ENCODE measurements at regions of chr16 and their contacts with region 1.

Region 1: DNA sequence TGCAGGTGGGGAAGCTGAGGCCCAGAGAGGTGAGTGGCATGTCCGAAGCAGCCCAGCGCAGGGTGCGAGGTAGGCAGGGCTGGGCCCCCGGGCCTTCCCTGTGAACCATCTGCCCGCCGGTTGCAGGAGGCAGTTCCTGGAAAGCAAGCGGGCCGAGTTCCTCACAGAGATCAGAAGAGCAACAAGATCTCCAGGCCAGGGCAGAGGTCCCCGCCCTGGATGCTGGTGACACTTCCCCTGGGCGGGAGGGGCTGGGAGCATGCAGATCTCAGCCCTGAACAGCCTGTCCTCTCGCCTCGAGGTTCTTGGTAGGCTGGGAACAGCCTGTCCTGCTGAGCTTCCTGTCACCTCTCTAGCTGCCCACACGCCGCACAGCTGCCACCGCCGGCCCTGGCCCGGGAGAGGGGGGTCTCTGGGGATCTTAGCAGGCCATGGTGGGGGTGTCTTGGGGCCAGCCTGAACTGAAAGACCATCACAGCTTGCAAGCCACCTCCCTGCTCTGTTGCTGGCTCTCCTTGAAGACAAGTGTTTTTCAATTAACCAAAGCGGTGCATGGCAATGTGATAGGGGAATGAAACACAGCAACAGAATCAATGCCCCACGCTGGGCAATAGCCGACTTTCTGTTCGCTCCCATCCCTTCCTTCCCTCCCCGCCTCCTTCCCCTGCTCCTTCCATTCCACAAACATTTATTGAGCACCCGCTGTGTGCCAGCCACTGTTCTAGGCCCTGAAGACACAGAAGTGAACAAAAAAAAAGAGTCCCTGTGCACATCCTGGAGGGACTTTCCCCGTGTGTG is 31.7 kb downstream of the SOCS1 start:
- DNase-seq: peak; percentile 88
- ATAC-seq: peak; percentile 55
- H3K4me3 Mint-ChIP-seq: peak overlapping the region; percentile 54
- H3K27ac Mint-ChIP-seq: peak overlapping the region; percentile 98
- H3K4me1 Mint-ChIP-seq: peaks cover 61% of the 10 kb centered on the region
- H3K27me3 Mint-ChIP-seq: no peaks in the 10 kb centered on the region

Region 2: GRCh38 chr16:10743610-10744393 is 480.5 kb before region 1 on chr16 and contains the start of gene NUBP1:
- CTCF ChIA-PET with region 1: no interaction called
- POLR2A ChIA-PET with region 1: no interaction called
- intact Hi-C with region 1: loop called in 1 of 2 experiments (anchors 5 kb)
- DNase-seq: peak; percentile 100
- ATAC-seq: peak; percentile 95
- H3K4me3 Mint-ChIP-seq: peak within 1 kb of the TSS; percentile 75
- H3K27ac Mint-ChIP-seq: peak within 1 kb of the TSS; percentile 98
- H3K4me1 Mint-ChIP-seq: peaks cover 30% of the 10 kb centered on the region
- H3K27me3 Mint-ChIP-seq: no peaks in the 10 kb centered on the region
- total RNA-seq, gene NUBP1: 25.9 to 33.1 TPM

Region 3: DNA sequence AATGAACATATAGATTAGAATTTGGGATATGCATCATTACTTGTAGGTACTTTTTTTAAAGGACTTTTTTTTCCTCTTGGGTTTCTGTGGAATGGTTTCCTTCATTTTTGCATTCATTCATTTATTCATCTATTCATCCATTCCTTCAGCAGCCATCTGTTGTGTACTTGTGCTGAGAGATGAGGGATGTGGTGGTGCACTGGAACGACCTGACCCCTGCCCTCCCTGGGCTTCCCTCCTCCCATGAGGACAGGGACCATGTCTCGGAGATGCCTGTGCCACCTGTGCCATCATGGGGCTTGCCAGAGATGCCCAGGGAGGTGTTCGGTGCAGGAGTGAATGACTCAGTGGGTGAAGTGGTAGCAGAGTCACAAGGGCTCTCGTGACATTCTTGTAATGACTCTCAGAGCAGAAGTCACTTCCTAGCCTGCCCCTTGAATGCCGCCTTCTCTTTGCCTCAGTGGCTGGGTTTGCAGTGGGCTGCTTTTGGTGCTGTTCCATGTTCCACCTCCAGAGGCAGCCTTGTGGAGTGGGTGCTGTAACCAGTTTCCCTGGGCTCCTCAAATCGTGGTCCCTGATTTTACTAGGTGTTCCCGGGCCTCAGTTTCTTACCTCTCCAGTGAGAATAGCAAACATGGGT is 236.0 kb before region 1 on chr16:
- CTCF ChIA-PET with region 1: interaction called, 3 read pairs
- POLR2A ChIA-PET with region 1: no interaction called
- intact Hi-C with region 1: loop called (anchors 1 kb)
- DNase-seq: peak; percentile 91
- ATAC-seq: peak; percentile 88
- H3K4me3 Mint-ChIP-seq: peak overlapping the region; percentile 46
- H3K27ac Mint-ChIP-seq: peak overlapping the region; percentile 92
- H3K4me1 Mint-ChIP-seq: peaks cover 89% of the 10 kb centered on the region
- H3K27me3 Mint-ChIP-seq: no peaks in the 10 kb centered on the region

Region 4: DNA sequence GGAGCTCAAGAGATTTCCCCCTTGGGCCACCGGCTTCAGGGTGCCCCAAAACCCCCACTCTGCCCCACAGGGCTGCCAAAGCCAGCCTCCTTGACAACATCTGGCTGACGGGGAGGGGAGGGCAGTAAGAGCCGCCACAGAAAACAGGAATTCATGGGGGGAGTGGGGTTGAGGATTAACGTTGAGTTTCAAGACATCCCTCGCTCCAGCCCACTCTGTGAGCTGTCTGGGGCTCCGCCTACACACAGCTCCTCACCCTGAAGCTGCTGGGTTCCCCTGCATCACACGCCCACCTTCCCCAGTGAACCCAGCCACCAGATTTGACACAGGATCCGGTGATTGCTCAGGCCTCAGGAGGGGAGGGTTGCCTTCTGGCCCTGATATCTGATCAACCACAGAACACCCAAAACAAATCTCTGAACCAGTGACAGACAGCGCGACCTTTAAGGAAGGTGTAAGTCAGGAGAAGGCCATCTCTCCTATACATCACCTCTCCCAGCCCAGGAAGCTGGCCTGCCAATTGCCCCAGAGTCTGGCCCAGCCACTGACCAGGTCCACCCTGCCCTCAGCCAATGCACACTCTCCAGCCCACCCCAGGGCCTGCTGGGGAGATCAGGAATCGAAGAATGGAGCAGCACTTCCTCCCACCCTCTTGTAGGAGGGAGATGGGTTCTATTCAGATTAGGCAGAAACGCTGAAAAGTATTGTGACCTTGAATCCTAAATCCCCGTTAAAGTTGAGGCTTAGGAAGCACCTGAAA is 147.9 kb before region 1 on chr16:
- CTCF ChIA-PET with region 1: no interaction called
- POLR2A ChIA-PET with region 1: interaction called, 3 read pairs
- intact Hi-C with region 1: loop called in 1 of 2 experiments (anchors 1 kb)
- DNase-seq: peak; percentile 87
- ATAC-seq: peak; percentile 69
- H3K4me3 Mint-ChIP-seq: peak overlapping the region; percentile 15
- H3K27ac Mint-ChIP-seq: peak overlapping the region; percentile 89
- H3K4me1 Mint-ChIP-seq: peaks cover 96% of the 10 kb centered on the region
- H3K27me3 Mint-ChIP-seq: no peaks in the 10 kb centered on the region

Region 5: GRCh38 chr16:11175787-11176341 is 48.4 kb before region 1 on chr16:
- CTCF ChIA-PET with region 1: no interaction called
- POLR2A ChIA-PET with region 1: no interaction called
- intact Hi-C with region 1: loop called in 1 of 2 experiments (anchors 5 kb)
- DNase-seq: peak; percentile 68
- ATAC-seq: peak; percentile 86
- H3K4me3 Mint-ChIP-seq: no peak overlapping the region
- H3K27ac Mint-ChIP-seq: peak overlapping the region; percentile 90
- H3K4me1 Mint-ChIP-seq: peaks cover 41% of the 10 kb centered on the region
- H3K27me3 Mint-ChIP-seq: no peaks in the 10 kb centered on the region

Region 6: DNA sequence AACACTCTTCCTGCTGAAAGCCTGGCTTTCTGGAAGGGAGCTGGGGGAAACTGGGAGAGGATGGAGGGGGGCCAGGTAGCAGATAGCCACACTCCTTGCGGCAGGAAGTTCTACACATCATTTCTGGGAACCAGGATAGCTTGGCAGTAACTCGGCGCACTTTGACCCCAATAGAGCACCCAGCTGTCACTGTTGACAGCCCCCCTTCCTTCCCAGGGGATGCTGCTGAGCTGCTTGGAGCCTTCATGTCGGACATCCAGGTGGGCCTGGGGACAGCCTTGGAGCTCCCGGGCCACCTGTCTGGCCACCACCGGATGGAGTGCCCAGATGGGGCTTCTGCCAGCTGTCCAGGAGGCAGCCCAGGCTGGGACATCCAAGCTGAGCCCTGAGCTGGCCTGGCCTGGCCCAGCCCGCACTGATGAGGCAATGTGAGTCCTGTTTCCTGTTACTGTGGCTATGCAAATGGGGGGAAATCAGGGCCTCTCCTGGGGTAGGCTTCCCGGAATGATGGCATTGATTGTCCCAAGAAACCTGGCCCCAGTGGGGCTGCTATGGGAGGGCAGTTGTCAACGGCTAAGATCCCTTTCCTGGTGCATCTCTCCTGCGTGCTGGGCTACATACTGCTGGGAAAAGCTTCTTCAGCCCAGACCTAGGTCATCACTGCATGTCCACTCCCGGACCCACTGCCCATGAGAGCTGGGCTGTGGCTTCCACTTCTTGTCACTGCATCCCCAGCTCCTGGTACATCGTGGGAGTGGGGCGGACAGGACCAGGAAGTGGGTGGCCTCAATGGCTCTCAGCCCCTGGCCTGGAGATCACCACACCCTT is 18.3 kb before region 1 on chr16:
- CTCF ChIA-PET with region 1: no interaction called
- POLR2A ChIA-PET with region 1: interaction called, 7 read pairs
- intact Hi-C with region 1: loop called (anchors 2 kb)
- DNase-seq: peak; percentile 43
- ATAC-seq: peak; percentile 45
- H3K4me3 Mint-ChIP-seq: no peak overlapping the region
- H3K27ac Mint-ChIP-seq: peak overlapping the region; percentile 96
- H3K4me1 Mint-ChIP-seq: peaks cover 26% of the 10 kb centered on the region
- H3K27me3 Mint-ChIP-seq: no peaks in the 10 kb centered on the region

Region 7: DNA sequence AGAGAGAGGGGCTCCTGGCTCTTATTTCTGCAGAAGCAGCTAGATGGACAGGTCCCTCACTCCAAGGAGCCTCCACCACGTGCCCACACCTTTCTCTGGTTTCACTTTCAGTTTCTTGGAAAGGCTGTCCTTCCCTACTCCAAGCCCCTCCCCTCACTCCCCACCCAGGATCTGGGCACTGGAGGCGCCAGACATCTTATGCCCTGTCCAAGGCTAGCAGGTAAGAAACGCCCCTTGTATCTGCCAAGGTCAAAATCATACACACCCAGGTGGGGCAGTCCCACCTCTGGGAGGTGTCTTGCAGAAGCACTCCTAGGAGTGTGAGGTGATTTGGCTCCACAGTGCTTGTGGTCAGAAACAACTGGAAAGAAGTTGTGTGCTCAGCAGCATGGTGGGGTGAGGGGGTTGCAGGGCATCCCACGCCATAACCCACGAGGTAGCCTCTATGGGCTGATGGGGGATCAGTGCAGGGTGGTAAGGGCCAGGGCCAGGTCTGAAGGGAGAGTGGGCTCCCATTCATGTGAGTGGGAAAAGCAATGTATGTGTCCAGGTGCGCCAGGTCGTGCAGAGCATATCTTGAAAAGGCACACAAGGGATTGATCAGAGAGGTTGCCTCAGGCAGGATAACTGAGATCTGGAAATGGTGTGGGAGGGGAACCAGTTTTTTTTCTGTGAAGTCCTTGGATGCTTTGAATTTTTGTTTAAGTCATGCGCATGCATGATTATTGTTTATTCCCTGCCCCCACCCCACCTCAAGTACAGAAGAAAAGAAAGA is 88.6 kb after region 1 on chr16:
- CTCF ChIA-PET with region 1: no interaction called
- POLR2A ChIA-PET with region 1: no interaction called
- intact Hi-C with region 1: no loop called
- DNase-seq: peak; percentile 47
- ATAC-seq: peak; percentile 24
- H3K4me3 Mint-ChIP-seq: no peak overlapping the region
- H3K27ac Mint-ChIP-seq: peak overlapping the region; percentile 43
- H3K4me1 Mint-ChIP-seq: peaks cover 38% of the 10 kb centered on the region
- H3K27me3 Mint-ChIP-seq: no peaks in the 10 kb centered on the region

Region 8: GRCh38 chr16:11345040-11345862 is 121.0 kb after region 1 on chr16 and contains the start of gene RMI2:
- CTCF ChIA-PET with region 1: no interaction called
- POLR2A ChIA-PET with region 1: no interaction called
- intact Hi-C with region 1: loop called in 1 of 2 experiments (anchors 1 kb)
- DNase-seq: peak; percentile 99
- ATAC-seq: peak; percentile 96
- H3K4me3 Mint-ChIP-seq: peak within 1 kb of the TSS; percentile 90
- H3K27ac Mint-ChIP-seq: peak within 1 kb of the TSS; percentile 94
- H3K4me1 Mint-ChIP-seq: peaks cover 49% of the 10 kb centered on the region
- H3K27me3 Mint-ChIP-seq: no peaks in the 10 kb centered on the region
- total RNA-seq, gene RMI2: 56.0 to 69.8 TPM